IMR-90 (cell line): ENCODE measurements at regions of chr5 and their contacts with region 1.

Region 1: DNA sequence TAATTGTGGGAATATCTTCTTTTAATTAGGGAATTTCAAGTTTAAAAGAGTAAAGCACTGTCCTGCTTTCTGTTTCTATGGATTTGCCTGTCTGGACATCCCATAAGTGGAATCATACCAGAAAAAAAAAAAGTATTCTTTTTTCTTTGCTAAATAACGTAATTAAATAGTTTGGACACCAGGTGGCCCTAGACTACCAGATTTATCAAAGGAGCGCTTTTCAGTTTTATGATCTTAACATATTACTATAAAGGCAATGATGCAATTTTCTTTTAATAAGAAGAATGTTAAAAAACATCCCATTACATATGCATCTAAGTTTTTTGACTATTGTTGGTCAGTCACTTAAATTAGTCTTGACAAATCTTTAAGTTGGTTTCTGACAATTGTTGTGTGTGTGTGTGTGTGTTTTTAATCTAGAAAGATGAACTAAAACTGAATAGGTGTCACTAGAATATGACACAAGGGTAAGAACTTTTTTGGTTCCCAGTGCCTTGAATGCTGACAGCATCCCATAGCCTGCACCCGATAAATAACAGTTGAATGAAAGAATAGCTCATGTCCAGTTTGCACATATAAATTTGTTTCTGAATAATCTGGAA is 49.5 kb downstream of the C5orf22 start:
- DNase-seq: peak; percentile 52
- ATAC-seq: no peak
- H3K4me3 ChIP-seq: no peak overlapping the region
- H3K27ac ChIP-seq: no peak overlapping the region
- H3K4me1 ChIP-seq: peaks cover 2% of the 10 kb centered on the region
- H3K27me3 ChIP-seq: peaks cover 5% of the 10 kb centered on the region
- CTCF ChIP-seq: peak; percentile 63
- POLR2A ChIP-seq: no peak
- RAD21 ChIP-seq: peak; percentile 69

Region 2: GRCh38 chr5:31809050-31809870 is 227.7 kb after region 1 on chr5:
- CTCF ChIA-PET with region 1: interaction called, 5 read pairs
- POLR2A ChIA-PET with region 1: no interaction called
- dilution Hi-C with region 1: no loop called
- in situ Hi-C with region 1: loop called (anchors 10 kb)
- intact Hi-C with region 1: loop called (anchors 1 kb)
- DNase-seq: peak; percentile 70
- ATAC-seq: peak; percentile 87
- H3K4me3 ChIP-seq: no peak overlapping the region
- H3K27ac ChIP-seq: no peak overlapping the region
- H3K4me1 ChIP-seq: no peaks in the 10 kb centered on the region
- H3K27me3 ChIP-seq: peaks cover 20% of the 10 kb centered on the region
- CTCF ChIP-seq: peak; percentile 73
- POLR2A ChIP-seq: no peak
- RAD21 ChIP-seq: peak; percentile 71

Region 3: GRCh38 chr5:31839005-31839404 is 257.4 kb after region 1 on chr5:
- CTCF ChIA-PET with region 1: no interaction called
- POLR2A ChIA-PET with region 1: no interaction called
- dilution Hi-C with region 1: no loop called
- in situ Hi-C with region 1: no loop called
- intact Hi-C with region 1: no loop called
- DNase-seq: no peak
- ATAC-seq: no peak
- H3K4me3 ChIP-seq: no peak overlapping the region
- H3K27ac ChIP-seq: no peak overlapping the region
- H3K4me1 ChIP-seq: no peaks in the 10 kb centered on the region
- H3K27me3 ChIP-seq: peaks cover 26% of the 10 kb centered on the region
- CTCF ChIP-seq: no peak
- POLR2A ChIP-seq: no peak
- RAD21 ChIP-seq: no peak

Region 4: GRCh38 chr5:32076699-32077695 is 495.4 kb after region 1 on chr5:
- CTCF ChIA-PET with region 1: no interaction called
- POLR2A ChIA-PET with region 1: no interaction called
- dilution Hi-C with region 1: no loop called
- in situ Hi-C with region 1: loop called (anchors 5 kb)
- intact Hi-C with region 1: loop called (anchors 2 kb)
- DNase-seq: peak; percentile 59
- ATAC-seq: peak; percentile 69
- H3K4me3 ChIP-seq: no peak overlapping the region
- H3K27ac ChIP-seq: no peak overlapping the region
- H3K4me1 ChIP-seq: no peaks in the 10 kb centered on the region
- H3K27me3 ChIP-seq: peaks cover 13% of the 10 kb centered on the region
- CTCF ChIP-seq: peak; percentile 84
- POLR2A ChIP-seq: no peak
- RAD21 ChIP-seq: peak; percentile 91

Region 5: DNA sequence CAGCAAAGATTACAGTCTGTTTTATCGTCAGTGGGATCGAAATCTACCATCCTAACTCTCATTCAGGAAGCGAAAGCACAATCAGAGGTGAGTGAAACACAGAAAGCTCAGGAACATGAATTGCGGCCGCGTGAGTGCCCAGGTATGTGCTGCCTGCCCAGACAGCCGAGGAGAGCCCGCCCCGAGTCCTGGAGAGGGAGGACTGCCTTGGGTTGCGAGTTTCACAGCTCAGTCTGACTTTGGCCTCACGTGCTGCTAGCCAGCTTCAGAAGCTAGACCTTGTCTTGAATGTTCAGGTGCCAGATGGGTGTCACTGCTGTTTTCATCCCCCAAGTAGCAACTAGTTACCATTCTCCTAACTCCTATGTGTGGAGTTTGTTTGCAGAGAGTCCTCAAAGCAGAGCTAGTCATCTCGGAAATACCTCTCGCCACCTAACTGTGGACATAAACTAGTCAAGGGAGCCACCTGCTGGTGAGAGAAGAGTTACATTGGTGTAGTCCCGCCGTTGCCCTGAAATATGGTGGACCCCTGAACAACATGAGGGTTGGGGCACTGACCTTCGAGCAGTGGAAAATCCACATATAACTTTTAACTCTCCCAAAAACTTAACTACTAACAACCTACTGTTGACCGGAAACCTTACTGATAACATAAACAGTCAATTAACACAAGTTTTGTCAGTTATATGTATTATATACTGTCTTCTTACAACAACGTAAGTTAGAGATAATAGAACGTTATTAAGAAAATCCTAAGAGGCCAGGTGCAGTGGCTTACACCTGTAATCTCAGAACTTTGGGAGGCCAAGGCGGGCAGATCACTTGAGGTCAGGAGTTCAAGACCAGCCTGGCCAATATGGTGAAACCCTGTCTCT is 511.6 kb after region 1 on chr5:
- CTCF ChIA-PET with region 1: interaction called, 3 read pairs
- POLR2A ChIA-PET with region 1: no interaction called
- dilution Hi-C with region 1: no loop called
- in situ Hi-C with region 1: no loop called
- intact Hi-C with region 1: loop called (anchors 1 kb)
- DNase-seq: peak; percentile 78
- ATAC-seq: peak; percentile 91
- H3K4me3 ChIP-seq: no peak overlapping the region
- H3K27ac ChIP-seq: no peak overlapping the region
- H3K4me1 ChIP-seq: no peaks in the 10 kb centered on the region
- H3K27me3 ChIP-seq: no peaks in the 10 kb centered on the region
- CTCF ChIP-seq: peak; percentile 68
- POLR2A ChIP-seq: no peak
- RAD21 ChIP-seq: peak; percentile 81

Region 6: DNA sequence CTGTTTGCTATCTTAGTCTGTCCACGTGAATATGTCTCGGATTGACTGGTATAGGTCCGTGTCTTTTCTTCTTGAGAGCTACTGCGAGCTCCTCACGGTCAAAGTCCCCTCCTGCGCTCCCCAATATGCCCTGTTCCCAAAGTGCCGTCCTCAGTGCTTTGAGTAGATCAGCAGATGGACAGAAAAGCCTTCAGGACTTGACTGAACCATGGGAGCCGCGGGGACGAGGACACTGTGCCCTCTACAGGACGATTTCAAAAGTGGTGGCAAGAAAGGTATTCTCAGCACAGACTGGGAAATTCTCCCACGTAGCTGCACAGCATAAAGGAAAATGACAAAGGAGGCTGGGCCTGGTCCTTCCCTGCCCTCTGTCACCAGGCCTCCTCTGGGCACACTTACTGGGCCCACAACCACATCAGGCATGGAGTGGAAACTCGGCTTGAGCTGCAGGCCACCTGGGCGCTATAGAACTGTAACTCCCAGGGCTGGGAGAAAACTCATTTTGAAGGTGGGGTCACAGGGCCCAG is 747.8 kb after region 1 on chr5:
- CTCF ChIA-PET with region 1: no interaction called
- POLR2A ChIA-PET with region 1: no interaction called
- dilution Hi-C with region 1: no loop called
- in situ Hi-C with region 1: no loop called
- intact Hi-C with region 1: loop called (anchors 5 kb)
- DNase-seq: peak; percentile 60
- ATAC-seq: peak; percentile 95
- H3K4me3 ChIP-seq: no peak overlapping the region
- H3K27ac ChIP-seq: no peak overlapping the region
- H3K4me1 ChIP-seq: peaks cover 5% of the 10 kb centered on the region; the same call in 1 of the 2 replicates
- H3K27me3 ChIP-seq: no peaks in the 10 kb centered on the region
- CTCF ChIP-seq: peak; percentile 71
- POLR2A ChIP-seq: no peak
- RAD21 ChIP-seq: peak; percentile 82